Aorta (tissue), 5 donors: ENCODE measurements at regions of chr9 and their contacts with region 1.

Region 1: GRCh38 chr9:71302776-71303175 is 181.4 kb upstream of the TRPM3 start:
- DNase-seq: no peak
- ATAC-seq: no peak
- H3K4me3 ChIP-seq: no peak overlapping the region
- H3K27ac ChIP-seq: no peak overlapping the region
- H3K4me1 ChIP-seq: no peaks in the 10 kb centered on the region
- H3K27me3 ChIP-seq: no peaks in the 10 kb centered on the region

Region 2: GRCh38 chr9:71384352-71384751 is 81.6 kb after region 1 on chr9:
- intact Hi-C with region 1: loop called in 1 of 2 experiments (anchors 10 kb)
- DNase-seq: no peak
- ATAC-seq: no peak
- H3K4me3 ChIP-seq: no peak overlapping the region
- H3K27ac ChIP-seq: no peak overlapping the region
- H3K4me1 ChIP-seq: no peaks in the 10 kb centered on the region
- H3K27me3 ChIP-seq: no peaks in the 10 kb centered on the region

Region 3: GRCh38 chr9:71549023-71549422 is 246.2 kb after region 1 on chr9:
- intact Hi-C with region 1: no loop called
- DNase-seq: no peak
- ATAC-seq: no peak
- H3K4me3 ChIP-seq: no peak overlapping the region
- H3K27ac ChIP-seq: no peak overlapping the region
- H3K4me1 ChIP-seq: no peaks in the 10 kb centered on the region
- H3K27me3 ChIP-seq: no peaks in the 10 kb centered on the region